A549 (cell line): ENCODE measurements at regions of chr17 and their contacts with region 1.

Region 1: DNA sequence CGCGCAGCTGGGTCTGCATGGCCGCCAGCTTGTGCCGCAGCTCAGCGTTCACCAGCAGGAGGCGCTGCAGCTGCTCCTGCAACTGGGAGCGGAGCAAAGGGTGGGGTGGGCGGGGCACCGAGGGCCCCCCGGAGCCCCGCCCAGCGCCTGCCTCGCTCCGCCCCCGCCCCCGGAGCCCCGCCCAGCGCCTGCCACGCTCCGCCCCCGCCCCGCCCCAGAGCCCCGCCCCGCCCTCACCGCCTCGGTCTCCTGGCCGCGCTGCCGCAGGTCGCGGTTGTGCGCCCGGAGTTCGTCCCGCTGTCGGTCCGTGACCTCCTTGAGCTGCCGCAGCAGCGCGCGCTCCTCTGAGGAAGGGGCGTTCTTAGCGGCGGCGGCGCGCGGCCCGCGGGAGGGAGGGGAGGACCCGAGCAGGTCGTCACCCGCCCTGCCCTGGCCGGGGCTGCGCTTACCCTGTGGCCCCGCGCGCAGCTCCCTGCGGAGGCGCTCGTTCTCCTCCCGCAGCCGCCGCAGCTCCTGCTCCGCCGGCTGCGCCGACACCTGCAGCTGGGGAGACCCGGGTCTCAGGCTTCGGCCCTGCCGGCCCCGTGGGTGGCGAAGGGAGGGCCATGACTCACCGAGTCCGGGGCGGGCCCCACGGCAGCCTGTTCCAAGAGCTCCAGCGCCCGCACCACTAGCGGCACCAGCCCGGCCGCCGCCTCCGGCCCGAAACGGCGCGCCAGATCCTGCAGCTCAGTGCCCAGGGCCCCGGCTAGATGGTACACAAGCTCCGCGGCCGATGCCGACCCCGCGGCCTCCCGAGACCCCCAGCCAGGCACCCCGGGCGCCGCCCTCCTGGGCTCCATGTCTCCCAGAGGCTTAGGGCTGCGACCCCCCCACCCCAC is 463 bp downstream of the RILP start:
- DNase-seq: peak; percentile 88 to 97
- ATAC-seq: peak; percentile 61 to 74
- H3K4me3 ChIP-seq: peak overlapping the region; percentile 54
- H3K27ac ChIP-seq: peak overlapping the region; percentile 85 to 89
- H3K4me1 ChIP-seq: peaks cover 30% of the 10 kb centered on the region
- CTCF ChIP-seq: peak; percentile 99
- EP300 ChIP-seq: no peak
- POLR2A ChIP-seq: peak; percentile 85
- RAD21 ChIP-seq: peak; percentile 65 to 86

Region 2: DNA sequence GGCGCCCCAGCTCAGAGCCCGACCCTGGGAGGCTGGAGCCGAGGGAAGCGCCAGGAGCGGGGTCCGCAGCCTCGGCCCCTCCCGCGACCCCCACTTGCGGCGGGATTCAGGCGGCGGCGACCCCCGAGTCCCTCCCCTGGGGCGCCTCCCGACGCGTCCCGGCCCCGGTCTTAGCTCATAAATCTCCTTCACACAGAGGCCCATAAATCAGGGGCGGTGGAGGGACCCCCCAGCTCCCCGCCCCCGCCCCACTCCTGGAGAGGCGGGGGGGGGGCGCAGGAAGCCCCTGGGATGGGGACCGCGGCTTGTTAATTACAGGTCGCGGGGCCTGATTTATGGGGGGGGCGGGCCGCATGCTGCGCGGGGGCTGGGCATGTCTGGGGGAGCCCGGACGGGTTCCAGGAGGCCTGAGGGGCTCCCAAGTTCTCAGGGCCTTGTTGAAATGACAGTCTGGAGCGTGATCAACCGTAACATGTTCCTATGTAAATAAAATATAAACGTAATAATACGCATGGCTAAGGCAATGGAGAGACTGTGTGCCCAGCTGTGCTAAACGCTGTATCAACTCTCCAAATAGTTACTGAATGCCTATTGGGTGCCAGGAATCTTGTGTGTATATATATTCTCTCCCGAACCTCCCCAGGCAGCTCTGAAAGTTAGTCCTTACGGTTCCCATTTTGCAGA is 389.0 kb before region 1 on chr17:
- CTCF ChIA-PET with region 1: interaction called, 17 read pairs
- POLR2A ChIA-PET with region 1: no interaction called
- DNase-seq: no peak
- ATAC-seq: peak in 1 of 2 experiments; percentile 12; a peak in 3 of 6 replicates
- H3K4me3 ChIP-seq: peak overlapping the region; percentile 57
- H3K27ac ChIP-seq: peak overlapping the region; percentile 72 to 82
- H3K4me1 ChIP-seq: no peaks in the 10 kb centered on the region
- CTCF ChIP-seq: no peak
- EP300 ChIP-seq: no peak
- POLR2A ChIP-seq: no peak
- RAD21 ChIP-seq: no peak

Region 3: GRCh38 chr17:1580979-1581678 is 68.1 kb before region 1 on chr17:
- CTCF ChIA-PET with region 1: interaction called, 201 read pairs
- POLR2A ChIA-PET with region 1: interaction called, 3 read pairs
- DNase-seq: no peak
- ATAC-seq: no peak
- H3K4me3 ChIP-seq: no peak overlapping the region
- H3K27ac ChIP-seq: no peak overlapping the region
- H3K4me1 ChIP-seq: peaks cover 16% of the 10 kb centered on the region
- CTCF ChIP-seq: no peak
- EP300 ChIP-seq: no peak
- POLR2A ChIP-seq: no peak
- RAD21 ChIP-seq: no peak

Region 4: GRCh38 chr17:1606352-1607033 is 42.7 kb before region 1 on chr17:
- CTCF ChIA-PET with region 1: interaction called, 14 read pairs
- POLR2A ChIA-PET with region 1: no interaction called
- DNase-seq: no peak
- ATAC-seq: peak in 1 of 2 experiments; percentile 28; a peak in 3 of 6 replicates
- H3K4me3 ChIP-seq: no peak overlapping the region
- H3K27ac ChIP-seq: no peak overlapping the region
- H3K4me1 ChIP-seq: no peaks in the 10 kb centered on the region
- CTCF ChIP-seq: no peak
- EP300 ChIP-seq: no peak
- POLR2A ChIP-seq: no peak
- RAD21 ChIP-seq: no peak

Region 5: DNA sequence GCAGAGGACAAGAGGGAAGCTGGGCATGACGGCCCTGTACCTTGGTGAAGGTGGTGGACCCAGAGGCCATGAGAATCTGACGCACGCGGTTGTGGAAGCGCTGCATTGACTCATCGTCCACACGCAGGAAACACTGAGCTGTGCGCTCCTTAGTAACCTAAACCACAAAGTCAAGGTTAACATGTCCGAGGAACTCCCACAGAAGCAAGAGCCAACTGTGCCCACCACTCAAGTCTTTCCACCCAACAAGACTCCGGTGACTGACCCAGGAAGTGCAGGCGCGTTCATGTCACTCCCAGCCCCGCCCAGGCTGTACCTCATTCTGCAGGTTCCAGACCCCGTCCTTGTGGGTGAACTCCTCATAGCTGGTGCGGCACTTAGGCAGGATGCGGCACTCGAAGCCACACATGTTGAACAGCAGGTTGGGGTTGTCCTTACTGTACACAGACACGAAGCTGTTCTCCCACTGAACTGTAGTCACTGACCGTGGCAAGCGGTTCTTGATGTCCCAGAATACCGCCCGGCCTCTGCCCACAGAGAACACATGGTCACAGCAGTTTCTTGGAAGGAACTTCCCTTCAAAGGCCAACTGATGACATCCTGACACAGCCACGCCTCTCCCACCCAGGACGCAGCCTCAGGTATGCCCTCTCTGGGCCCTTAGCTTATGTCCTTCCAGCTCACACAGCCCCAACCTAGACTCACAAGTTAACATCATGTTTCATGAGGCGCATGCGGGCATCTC is 24.0 kb after region 1 on chr17:
- CTCF ChIA-PET with region 1: interaction called, 204 read pairs
- POLR2A ChIA-PET with region 1: interaction called, 12 read pairs
- DNase-seq: no peak
- ATAC-seq: no peak; a peak in 1 of 6 replicates
- H3K4me3 ChIP-seq: no peak overlapping the region
- H3K27ac ChIP-seq: no peak overlapping the region
- H3K4me1 ChIP-seq: no peaks in the 10 kb centered on the region
- CTCF ChIP-seq: no peak
- EP300 ChIP-seq: no peak
- POLR2A ChIP-seq: no peak
- RAD21 ChIP-seq: no peak

Region 6: GRCh38 chr17:1736348-1737281 is 87.4 kb after region 1 on chr17:
- CTCF ChIA-PET with region 1: no interaction called
- POLR2A ChIA-PET with region 1: no interaction called
- DNase-seq: peak; percentile 66 to 67
- ATAC-seq: peak; percentile 40 to 78
- H3K4me3 ChIP-seq: no peak overlapping the region
- H3K27ac ChIP-seq: peak overlapping the region; percentile 53 to 84
- H3K4me1 ChIP-seq: peaks cover 20% of the 10 kb centered on the region
- CTCF ChIP-seq: no peak
- EP300 ChIP-seq: no peak
- POLR2A ChIP-seq: no peak
- RAD21 ChIP-seq: no peak

Region 7: GRCh38 chr17:1746975-1747543 is 97.9 kb after region 1 on chr17:
- CTCF ChIA-PET with region 1: no interaction called
- POLR2A ChIA-PET with region 1: no interaction called
- DNase-seq: no peak
- ATAC-seq: no peak
- H3K4me3 ChIP-seq: no peak overlapping the region
- H3K27ac ChIP-seq: no peak overlapping the region
- H3K4me1 ChIP-seq: peaks cover 8% of the 10 kb centered on the region; the same call in 2 of the 3 replicates
- CTCF ChIP-seq: no peak
- EP300 ChIP-seq: no peak
- POLR2A ChIP-seq: no peak
- RAD21 ChIP-seq: no peak